ENCODE measurements at regions of chr14 and their contacts with region 1.

Region 1: DNA sequence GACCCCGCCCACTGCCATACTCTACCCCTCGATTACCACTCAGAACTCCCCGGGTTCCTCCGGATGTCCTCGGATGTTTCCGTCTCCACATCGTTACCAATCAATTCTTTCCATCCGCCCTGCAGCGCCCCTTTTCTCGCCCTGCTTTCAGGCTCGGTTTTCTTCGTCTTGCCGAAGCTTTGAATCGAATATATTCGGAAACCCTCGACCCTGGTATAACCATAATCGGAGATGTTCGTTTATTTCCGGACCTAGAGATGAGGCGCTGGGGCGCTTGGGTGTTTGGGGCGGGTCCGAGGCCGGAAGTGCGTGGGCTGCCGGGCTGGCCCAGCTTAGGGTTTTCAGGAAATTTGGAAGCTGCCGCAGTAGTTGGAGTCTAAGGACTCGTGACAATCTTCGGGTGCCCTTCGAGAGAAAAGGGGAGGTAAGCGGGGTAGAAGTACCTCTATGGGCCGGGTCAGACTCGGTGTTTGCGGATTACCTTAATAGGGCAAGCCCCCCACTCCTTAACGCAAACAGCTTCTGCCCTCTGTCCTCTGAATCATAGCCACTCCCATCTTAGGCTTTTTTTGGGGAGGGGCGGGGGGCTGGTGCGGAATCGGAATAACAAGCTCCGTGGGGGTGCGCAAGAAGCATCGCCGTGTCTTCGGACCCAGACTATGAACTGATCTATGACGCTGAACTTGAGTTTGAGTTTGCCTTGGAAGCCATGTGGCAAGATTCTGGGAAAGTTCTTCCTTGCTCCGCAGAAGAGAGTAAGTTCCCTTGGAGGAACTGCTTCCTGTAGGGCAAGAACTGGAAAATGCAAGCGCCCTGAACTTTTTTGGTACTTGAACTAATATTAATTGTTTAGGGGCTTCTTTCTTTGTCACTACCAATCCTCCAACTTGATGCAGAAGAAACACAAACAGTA is at the start of gene C14orf119:
- DNase-seq: peak; percentile 100
- H3K4me3 Mint-ChIP-seq: no peak within 1 kb of the TSS
- H3K27ac Mint-ChIP-seq: no peak within 1 kb of the TSS
- H3K4me1 Mint-ChIP-seq: peaks cover 38% of the 10 kb centered on the region
- H3K27me3 Mint-ChIP-seq: no peaks in the 10 kb centered on the region
- total RNA-seq, gene C14orf119: 39.8 to 44.2 TPM

Region 2: GRCh38 chr14:22852940-22853767 is 242.3 kb before region 1 on chr14:
- CTCF ChIA-PET with region 1: no interaction called
- intact Hi-C with region 1: no loop called
- DNase-seq: peak; percentile 95
- H3K4me3 Mint-ChIP-seq: peak overlapping the region; percentile 72
- H3K27ac Mint-ChIP-seq: peak overlapping the region; percentile 84
- H3K4me1 Mint-ChIP-seq: peaks cover 24% of the 10 kb centered on the region
- H3K27me3 Mint-ChIP-seq: no peaks in the 10 kb centered on the region

Region 3: GRCh38 chr14:22955702-22956569 is 139.5 kb before region 1 on chr14:
- CTCF ChIA-PET with region 1: no interaction called
- intact Hi-C with region 1: loop called (anchors 1 kb)
- DNase-seq: no peak
- H3K4me3 Mint-ChIP-seq: peak overlapping the region; percentile 89
- H3K27ac Mint-ChIP-seq: peak overlapping the region; percentile 84
- H3K4me1 Mint-ChIP-seq: peaks cover 22% of the 10 kb centered on the region
- H3K27me3 Mint-ChIP-seq: no peaks in the 10 kb centered on the region

Region 4: DNA sequence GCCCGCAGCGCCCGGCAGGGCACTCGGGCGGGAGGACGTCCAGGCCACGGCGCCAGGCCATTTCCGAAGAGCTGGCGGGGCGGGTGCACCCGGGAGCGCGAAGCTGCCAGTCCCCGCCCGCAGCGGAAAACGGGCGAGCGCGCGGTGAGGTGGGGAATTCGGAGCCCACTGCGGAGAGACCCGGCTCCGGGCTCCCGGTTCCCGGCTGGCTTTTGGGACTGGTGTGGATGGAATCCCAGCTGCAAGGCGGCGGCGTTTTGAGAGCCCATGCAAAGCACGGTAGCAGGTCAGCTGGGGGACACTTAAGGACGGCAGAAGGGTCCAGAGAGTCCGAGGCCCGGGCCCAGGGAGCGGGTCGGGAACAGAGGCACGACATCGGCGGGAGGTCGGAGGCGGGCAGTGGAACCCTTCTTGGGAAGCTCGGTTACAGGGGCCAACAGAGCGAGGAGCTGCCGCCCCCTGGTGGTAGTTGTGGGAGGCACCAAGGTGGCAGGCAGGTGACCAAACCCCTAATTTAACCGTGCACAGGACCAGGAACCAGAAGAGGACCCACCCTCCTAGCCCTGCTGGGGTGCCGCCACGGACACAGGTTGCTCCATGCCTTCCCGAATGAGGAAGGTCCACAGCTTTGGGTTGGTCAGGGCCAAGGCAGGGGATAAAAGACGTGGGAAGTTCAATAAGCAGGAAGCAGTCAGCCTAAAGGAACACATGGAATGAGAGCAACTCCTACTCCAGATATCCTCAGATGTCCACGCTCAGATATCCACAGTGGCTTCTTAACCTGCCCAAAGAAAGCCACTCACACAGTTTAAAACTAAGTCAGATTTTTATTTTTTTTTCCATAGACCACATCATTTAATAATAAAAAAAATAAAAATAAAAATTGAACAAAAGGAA is 37.4 kb before region 1 on chr14:
- CTCF ChIA-PET with region 1: interaction called, 14 read pairs
- intact Hi-C with region 1: no loop called
- DNase-seq: peak; percentile 92
- H3K4me3 Mint-ChIP-seq: peak overlapping the region; percentile 80
- H3K27ac Mint-ChIP-seq: no peak overlapping the region
- H3K4me1 Mint-ChIP-seq: peaks cover 16% of the 10 kb centered on the region
- H3K27me3 Mint-ChIP-seq: peaks cover 5% of the 10 kb centered on the region

Region 5: DNA sequence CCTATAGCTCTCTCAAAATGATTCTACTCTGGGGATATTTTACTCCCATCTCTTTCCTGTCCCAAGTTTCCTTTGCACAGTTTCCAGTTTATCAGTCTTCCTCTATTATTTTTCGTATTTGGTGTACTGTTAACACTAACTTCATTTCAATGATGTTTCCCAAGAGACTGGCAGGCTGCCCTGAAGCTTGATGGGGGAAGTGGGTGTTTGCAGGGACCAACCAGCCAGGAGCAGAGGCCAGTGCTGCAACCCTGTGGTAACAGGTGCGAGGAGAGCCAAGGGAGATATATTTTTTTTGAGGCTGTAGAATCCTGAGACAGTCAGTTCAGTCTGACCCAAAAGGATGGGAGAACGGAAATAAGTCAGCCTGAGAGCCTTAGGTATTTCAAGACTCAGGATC is 35.4 kb after region 1 on chr14:
- CTCF ChIA-PET with region 1: no interaction called
- intact Hi-C with region 1: no loop called
- DNase-seq: no peak
- H3K4me3 Mint-ChIP-seq: no peak overlapping the region
- H3K27ac Mint-ChIP-seq: no peak overlapping the region
- H3K4me1 Mint-ChIP-seq: peaks cover 1% of the 10 kb centered on the region
- H3K27me3 Mint-ChIP-seq: no peaks in the 10 kb centered on the region

Region 6: GRCh38 chr14:23186913-23187654 is 91.6 kb after region 1 on chr14:
- CTCF ChIA-PET with region 1: interaction called, 12 read pairs
- intact Hi-C with region 1: no loop called
- DNase-seq: peak; percentile 55
- H3K4me3 Mint-ChIP-seq: no peak overlapping the region
- H3K27ac Mint-ChIP-seq: no peak overlapping the region
- H3K4me1 Mint-ChIP-seq: no peaks in the 10 kb centered on the region
- H3K27me3 Mint-ChIP-seq: no peaks in the 10 kb centered on the region

Region 7: GRCh38 chr14:23469127-23469905 is 373.9 kb after region 1 on chr14 and contains the start of gene NGDN:
- CTCF ChIA-PET with region 1: no interaction called
- intact Hi-C with region 1: loop called (anchors 1 kb)
- DNase-seq: peak; percentile 96
- H3K4me3 Mint-ChIP-seq: no peak within 1 kb of the TSS
- H3K27ac Mint-ChIP-seq: no peak within 1 kb of the TSS
- H3K4me1 Mint-ChIP-seq: peaks cover 11% of the 10 kb centered on the region
- H3K27me3 Mint-ChIP-seq: no peaks in the 10 kb centered on the region
- total RNA-seq, gene NGDN: 38.9 to 40.8 TPM